A549 (cell line): ENCODE measurements at regions of chr16 and their contacts with region 1.

Region 1: DNA sequence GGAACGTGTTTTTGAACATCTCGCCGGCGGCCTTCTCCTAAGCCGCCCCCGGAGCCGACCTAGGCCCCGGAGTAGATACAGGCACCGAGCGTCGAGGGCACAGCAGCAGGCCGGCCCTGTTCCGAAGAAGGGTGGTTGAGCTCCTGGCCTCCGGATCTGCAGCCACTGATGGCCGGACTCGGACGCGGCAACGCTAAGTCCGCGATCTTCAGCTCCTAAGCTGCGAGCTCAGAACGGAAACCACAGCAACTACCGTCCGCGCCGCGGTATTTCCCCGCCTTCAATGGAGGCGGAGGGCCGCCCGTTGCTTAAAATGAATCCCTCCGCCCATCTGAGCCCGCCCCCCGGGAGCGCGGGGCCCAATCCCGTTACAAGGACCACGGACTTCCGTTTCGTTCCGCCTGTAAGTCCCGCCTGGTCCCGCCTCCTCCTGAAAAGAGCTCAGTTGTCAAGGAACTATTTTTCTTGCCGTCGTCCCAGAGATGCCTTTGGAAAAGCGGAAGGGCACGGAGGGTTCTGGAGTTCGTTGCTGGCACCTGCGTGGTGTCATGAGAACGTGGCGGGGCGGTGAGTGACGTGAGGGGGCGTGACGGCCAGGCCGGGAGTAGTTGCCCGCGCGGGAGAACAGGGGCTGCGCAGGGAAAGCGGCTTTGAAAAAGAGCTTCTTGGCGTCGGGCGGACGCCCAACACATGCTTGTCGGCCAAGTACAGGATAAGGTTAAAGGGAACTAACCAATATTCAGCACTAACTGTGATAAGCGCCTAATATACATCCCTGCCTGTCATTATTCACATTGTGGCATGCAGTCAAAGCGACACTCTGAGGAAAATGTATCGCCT is at the start of gene CFAP20:
- DNase-seq: peak; percentile 91 to 100
- ATAC-seq: peak; percentile 92 to 96
- H3K4me3 ChIP-seq: peak within 1 kb of the TSS; percentile 96
- H3K27ac ChIP-seq: peak within 1 kb of the TSS; percentile 85 to 88
- H3K4me1 ChIP-seq: peaks cover 21% of the 10 kb centered on the region
- CTCF ChIP-seq: no peak
- EP300 ChIP-seq: no peak
- POLR2A ChIP-seq: peak; percentile 84
- RAD21 ChIP-seq: no peak
- polyA plus RNA-seq, gene CFAP20: 51.0 and 53.1 TPM in 2 replicates

Region 2: DNA sequence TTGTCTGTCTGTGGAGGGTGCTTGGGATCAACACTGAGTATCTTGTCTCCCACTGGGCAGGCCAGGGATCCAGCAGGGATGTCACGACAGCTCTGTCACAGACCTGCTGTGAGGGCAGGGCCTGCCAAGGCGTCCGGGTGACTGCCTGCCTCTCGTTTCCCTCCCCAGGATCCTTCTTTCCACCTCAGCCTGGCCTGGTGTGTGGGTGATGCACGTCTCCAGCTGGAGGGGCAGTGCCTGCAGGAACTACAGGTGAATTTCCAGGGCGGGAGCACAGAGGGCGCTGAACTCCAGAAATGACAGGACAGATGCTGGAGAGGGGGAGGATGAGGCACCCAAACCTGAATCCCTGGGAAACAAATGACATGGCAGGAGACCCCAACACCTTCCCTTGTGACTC is 110.5 kb before region 1 on chr16:
- CTCF ChIA-PET with region 1: interaction called, 29 read pairs
- POLR2A ChIA-PET with region 1: interaction called, 5 read pairs
- DNase-seq: no peak
- ATAC-seq: peak in 1 of 2 experiments; percentile 41; a peak in 2 of 6 replicates
- H3K4me3 ChIP-seq: no peak overlapping the region
- H3K27ac ChIP-seq: no peak overlapping the region
- H3K4me1 ChIP-seq: peaks cover 13% of the 10 kb centered on the region; the same call in 1 of the 3 replicates
- CTCF ChIP-seq: 0 out of 3 replicates have a peak, but pooled peaks have one; percentile 6
- EP300 ChIP-seq: no peak
- POLR2A ChIP-seq: no peak
- RAD21 ChIP-seq: no peak

Region 3: GRCh38 chr16:58025351-58026138 is 103.8 kb before region 1 on chr16 and contains the start of gene MMP15:
- CTCF ChIA-PET with region 1: interaction called, 13 read pairs
- POLR2A ChIA-PET with region 1: interaction called, 13 read pairs
- DNase-seq: peak; percentile 75 to 81
- ATAC-seq: peak; percentile 66 to 76
- H3K4me3 ChIP-seq: peak within 1 kb of the TSS; percentile 80
- H3K27ac ChIP-seq: peak within 1 kb of the TSS; percentile 79 to 84
- H3K4me1 ChIP-seq: peaks cover 20% of the 10 kb centered on the region; the same call in 1 of the 3 replicates
- CTCF ChIP-seq: no peak
- EP300 ChIP-seq: no peak
- POLR2A ChIP-seq: peak; percentile 72
- RAD21 ChIP-seq: no peak
- polyA plus RNA-seq, gene MMP15: 4.3 and 5.2 TPM in 2 replicates

Region 4: DNA sequence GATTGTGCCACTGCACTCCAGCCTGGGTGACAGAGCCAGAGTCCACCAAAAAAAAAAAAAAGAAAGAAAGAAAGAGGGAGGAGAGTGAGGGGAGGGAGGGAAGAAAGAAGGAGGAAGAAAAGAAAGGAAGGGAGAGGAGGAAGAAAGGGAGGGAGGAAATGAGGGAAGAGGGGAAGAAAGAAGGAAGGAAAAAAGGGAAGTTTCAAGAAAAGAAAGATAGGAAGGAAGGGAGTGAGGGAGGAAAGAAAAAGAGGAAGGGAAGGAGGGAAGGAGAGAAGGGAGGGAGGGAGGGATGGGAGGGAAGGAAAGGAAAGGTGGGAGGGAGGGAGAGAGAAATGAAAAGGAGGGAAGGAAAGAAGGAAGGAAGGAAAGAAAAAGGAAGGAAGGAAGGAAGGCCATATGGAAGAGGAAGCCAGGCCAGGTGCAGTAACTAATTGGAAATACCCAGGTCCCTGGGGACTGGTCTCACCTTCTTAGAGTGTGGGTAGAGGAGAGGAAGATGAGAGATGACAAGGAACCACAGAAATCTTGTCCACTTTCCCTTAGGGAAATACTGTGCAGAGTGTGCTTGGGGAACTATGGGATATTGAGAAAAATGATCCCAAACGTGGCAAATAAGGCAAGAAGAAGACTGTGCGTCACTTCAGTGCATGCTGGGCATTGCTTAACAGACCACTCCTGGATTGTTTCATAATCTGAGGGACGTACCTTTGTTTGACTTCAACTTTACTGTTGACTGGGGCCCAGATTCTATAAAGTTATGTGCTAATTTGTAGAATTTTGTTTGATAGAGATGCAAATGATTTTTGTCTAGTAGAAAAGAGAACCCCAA is 83.7 kb after region 1 on chr16:
- CTCF ChIA-PET with region 1: no interaction called
- POLR2A ChIA-PET with region 1: no interaction called
- DNase-seq: no peak
- ATAC-seq: no peak
- H3K4me3 ChIP-seq: no peak overlapping the region
- H3K27ac ChIP-seq: no peak overlapping the region
- H3K4me1 ChIP-seq: no peaks in the 10 kb centered on the region
- CTCF ChIP-seq: no peak
- EP300 ChIP-seq: no peak
- POLR2A ChIP-seq: no peak
- RAD21 ChIP-seq: no peak